B cell (primary cell): ENCODE measurements at regions of chr20 and their contacts with region 1.

Region 1: GRCh38 chr20:45934586-45935415 is at the start of gene PCIF1:
- DNase-seq: peak; percentile 100
- ATAC-seq: peak; percentile 82
- H3K4me3 ChIP-seq: peak within 1 kb of the TSS; percentile 88 to 100 (median 93)
- H3K4me3 Mint-ChIP-seq: peak within 1 kb of the TSS; percentile 96
- H3K27ac ChIP-seq: peak within 1 kb of the TSS; percentile 99
- H3K27ac Mint-ChIP-seq: peak within 1 kb of the TSS; percentile 98
- H3K4me1 ChIP-seq: peaks cover 12 to 19% of the 10 kb centered on the region in 2 donors
- H3K4me1 Mint-ChIP-seq: peaks cover 28% of the 10 kb centered on the region
- H3K27me3 ChIP-seq: no peaks in the 10 kb centered on the region
- H3K27me3 Mint-ChIP-seq: no peaks in the 10 kb centered on the region
- CTCF ChIP-seq: no peak
- total RNA-seq, gene PCIF1: 78.9 and 79.2 TPM in 2 replicates

Region 2: DNA sequence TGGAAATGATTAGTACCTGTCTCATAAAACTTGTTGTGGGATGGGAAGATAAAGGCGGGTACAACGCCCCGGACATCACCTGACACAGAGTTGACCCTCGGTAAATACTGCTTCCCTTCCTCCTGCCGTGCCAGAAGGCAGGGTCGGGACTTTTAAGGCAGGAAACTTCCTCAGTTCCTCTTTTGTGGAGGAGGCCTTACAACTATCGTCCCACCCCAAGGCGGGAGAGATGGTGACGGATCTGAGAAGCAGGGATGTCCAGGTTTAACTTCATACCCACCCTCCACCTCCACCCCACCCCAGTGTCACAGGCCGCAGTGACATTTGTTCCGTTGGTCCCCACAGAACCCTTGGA is 142.5 kb before region 1 on chr20:
- CTCF ChIA-PET with region 1: no interaction called
- POLR2A ChIA-PET with region 1: interaction called, 6 read pairs
- intact Hi-C with region 1: loop called (anchors 1 kb)
- DNase-seq: peak; percentile 61
- ATAC-seq: peak; percentile 22
- H3K4me3 ChIP-seq: peak overlapping the region; percentile 72 to 95 (median 89)
- H3K4me3 Mint-ChIP-seq: peak overlapping the region; percentile 90
- H3K27ac ChIP-seq: peak overlapping the region; percentile 75 to 96
- H3K27ac Mint-ChIP-seq: peak overlapping the region; percentile 93
- H3K4me1 ChIP-seq: peaks cover 8 to 13% of the 10 kb centered on the region in 2 donors
- H3K4me1 Mint-ChIP-seq: peaks cover 19% of the 10 kb centered on the region
- H3K27me3 ChIP-seq: no peaks in the 10 kb centered on the region
- H3K27me3 Mint-ChIP-seq: no peaks in the 10 kb centered on the region
- CTCF ChIP-seq: no peak

Region 3: GRCh38 chr20:45880988-45881788 is 53.6 kb before region 1 on chr20 and contains the start of gene ZSWIM1:
- CTCF ChIA-PET with region 1: interaction called, 3 read pairs
- POLR2A ChIA-PET with region 1: interaction called, 19 read pairs
- intact Hi-C with region 1: loop called (anchors 1 kb)
- DNase-seq: peak; percentile 99
- ATAC-seq: peak; percentile 99
- H3K4me3 ChIP-seq: peak within 1 kb of the TSS; percentile 76 to 96 (median 86)
- H3K4me3 Mint-ChIP-seq: peak within 1 kb of the TSS; percentile 91
- H3K27ac ChIP-seq: peak within 1 kb of the TSS; percentile 82 to 89
- H3K27ac Mint-ChIP-seq: peak within 1 kb of the TSS; percentile 90
- H3K4me1 ChIP-seq: peaks cover 3 to 19% of the 10 kb centered on the region in 2 donors
- H3K4me1 Mint-ChIP-seq: peaks cover 33% of the 10 kb centered on the region
- H3K27me3 ChIP-seq: no peaks in the 10 kb centered on the region
- H3K27me3 Mint-ChIP-seq: no peaks in the 10 kb centered on the region
- CTCF ChIP-seq: no peak
- total RNA-seq, gene ZSWIM1: 15.7 and 18.5 TPM in 2 replicates

Region 4: DNA sequence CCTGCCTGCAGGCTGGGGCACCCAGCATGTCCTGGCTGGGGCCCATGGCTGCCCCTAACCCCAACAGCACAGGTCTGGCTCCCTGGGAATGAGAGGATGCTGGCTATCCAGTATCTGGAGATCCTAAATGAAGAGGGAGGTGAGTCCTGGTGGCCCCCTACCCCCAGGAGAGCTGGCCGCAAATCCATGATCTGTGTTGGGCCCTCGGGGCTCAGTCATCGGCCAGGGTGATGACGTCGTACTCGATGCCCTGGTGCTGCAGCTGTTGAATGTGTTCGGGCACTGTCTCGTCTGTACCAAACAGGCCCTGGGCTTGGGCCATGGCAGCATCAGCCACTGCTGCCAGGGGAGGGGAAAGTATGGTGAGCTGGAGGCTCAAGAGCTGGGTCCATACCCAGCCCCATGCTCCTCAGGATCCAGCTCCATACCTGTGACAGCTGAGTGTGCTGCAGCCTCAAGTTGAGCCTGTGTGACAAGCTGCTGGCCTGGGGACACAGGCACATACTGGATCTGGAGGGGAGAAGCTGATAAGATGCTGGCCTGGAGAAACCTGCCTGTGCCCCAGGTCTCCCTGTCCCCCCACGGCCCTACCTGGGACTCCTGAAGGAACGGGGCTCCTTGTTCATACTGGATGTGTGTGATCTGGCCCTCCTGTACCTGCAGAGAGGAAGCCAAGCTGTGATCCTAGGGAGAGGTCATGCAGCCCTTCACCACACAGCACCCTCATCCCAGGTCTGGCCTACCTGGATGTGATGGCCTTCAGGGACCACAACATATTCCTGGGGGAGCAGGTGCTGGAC is 14.1 kb after region 1 on chr20:
- CTCF ChIA-PET with region 1: interaction called, 3 read pairs
- POLR2A ChIA-PET with region 1: interaction called, 10 read pairs
- intact Hi-C with region 1: no loop called
- DNase-seq: peak; percentile 22
- ATAC-seq: no peak
- H3K4me3 ChIP-seq: no peak overlapping the region
- H3K4me3 Mint-ChIP-seq: no peak overlapping the region
- H3K27ac ChIP-seq: no peak overlapping the region
- H3K27ac Mint-ChIP-seq: peak overlapping the region; percentile 33
- H3K4me1 ChIP-seq: no peaks in the 10 kb centered on the region
- H3K4me1 Mint-ChIP-seq: peaks cover 4% of the 10 kb centered on the region
- H3K27me3 ChIP-seq: no peaks in the 10 kb centered on the region
- H3K27me3 Mint-ChIP-seq: no peaks in the 10 kb centered on the region
- CTCF ChIP-seq: no peak

Region 5: DNA sequence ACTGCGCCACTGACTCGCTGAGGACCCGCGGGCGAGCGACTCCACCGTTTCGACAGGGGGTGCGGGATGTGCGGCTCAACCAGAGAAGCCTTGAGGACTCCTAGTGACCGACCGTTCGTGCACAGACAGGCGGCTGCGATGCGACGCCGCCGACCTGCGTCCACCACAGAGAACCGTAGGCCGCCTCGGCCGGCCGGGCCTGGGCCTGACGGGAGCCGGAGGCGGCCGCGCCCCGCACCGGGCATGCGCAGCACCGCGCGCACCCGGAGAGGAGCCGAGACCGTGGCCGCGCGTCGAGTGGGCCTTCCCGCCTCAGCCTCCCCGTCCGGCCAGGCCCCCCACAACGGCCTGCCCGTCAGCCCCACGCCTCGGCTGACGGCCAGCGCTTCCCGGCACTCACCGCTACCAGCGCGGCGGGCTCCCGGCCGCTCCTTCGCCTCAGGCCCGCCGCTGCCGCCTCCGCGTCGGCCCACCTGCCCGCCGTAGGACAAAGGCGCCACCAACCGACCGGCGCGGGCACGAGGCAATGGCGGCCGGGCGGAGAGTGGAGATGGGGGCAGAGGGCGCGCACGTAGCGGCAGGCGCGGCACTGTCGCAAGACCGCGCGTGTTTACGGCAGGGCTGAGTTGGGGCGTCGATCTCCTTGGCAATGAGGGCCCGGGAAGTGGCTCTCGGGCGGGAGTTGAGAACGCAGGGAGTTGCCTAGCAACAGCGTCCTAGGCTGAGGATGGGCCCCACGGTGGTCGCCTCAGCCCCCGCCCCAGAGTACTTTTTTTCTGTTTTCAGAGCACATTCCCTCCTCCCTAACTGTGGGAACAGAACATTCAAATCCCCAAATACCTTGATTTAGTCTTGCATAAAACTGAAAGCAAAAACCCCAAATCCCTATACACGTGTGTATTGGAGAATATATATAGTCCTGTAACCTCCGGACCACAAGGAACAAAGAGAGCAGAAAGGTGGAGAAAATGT is 154.9 kb after region 1 on chr20 and contains the start of gene NCOA5:
- CTCF ChIA-PET with region 1: no interaction called
- POLR2A ChIA-PET with region 1: no interaction called
- intact Hi-C with region 1: loop called (anchors 2 kb)
- DNase-seq: peak; percentile 97
- ATAC-seq: peak; percentile 92
- H3K4me3 ChIP-seq: peak within 1 kb of the TSS; percentile 71 to 86 (median 81)
- H3K4me3 Mint-ChIP-seq: peak within 1 kb of the TSS; percentile 93
- H3K27ac ChIP-seq: peak within 1 kb of the TSS; percentile 71 to 94
- H3K27ac Mint-ChIP-seq: peak within 1 kb of the TSS; percentile 90
- H3K4me1 ChIP-seq: peaks cover 21 to 38% of the 10 kb centered on the region in 2 donors
- H3K4me1 Mint-ChIP-seq: peaks cover 47% of the 10 kb centered on the region
- H3K27me3 ChIP-seq: no peaks in the 10 kb centered on the region
- H3K27me3 Mint-ChIP-seq: no peaks in the 10 kb centered on the region
- CTCF ChIP-seq: peak; percentile 32
- total RNA-seq, gene NCOA5: 41.6 and 44.1 TPM in 2 replicates